K562 (cell line): ENCODE measurements at regions of chr1 and their contacts with region 1.

Region 1: DNA sequence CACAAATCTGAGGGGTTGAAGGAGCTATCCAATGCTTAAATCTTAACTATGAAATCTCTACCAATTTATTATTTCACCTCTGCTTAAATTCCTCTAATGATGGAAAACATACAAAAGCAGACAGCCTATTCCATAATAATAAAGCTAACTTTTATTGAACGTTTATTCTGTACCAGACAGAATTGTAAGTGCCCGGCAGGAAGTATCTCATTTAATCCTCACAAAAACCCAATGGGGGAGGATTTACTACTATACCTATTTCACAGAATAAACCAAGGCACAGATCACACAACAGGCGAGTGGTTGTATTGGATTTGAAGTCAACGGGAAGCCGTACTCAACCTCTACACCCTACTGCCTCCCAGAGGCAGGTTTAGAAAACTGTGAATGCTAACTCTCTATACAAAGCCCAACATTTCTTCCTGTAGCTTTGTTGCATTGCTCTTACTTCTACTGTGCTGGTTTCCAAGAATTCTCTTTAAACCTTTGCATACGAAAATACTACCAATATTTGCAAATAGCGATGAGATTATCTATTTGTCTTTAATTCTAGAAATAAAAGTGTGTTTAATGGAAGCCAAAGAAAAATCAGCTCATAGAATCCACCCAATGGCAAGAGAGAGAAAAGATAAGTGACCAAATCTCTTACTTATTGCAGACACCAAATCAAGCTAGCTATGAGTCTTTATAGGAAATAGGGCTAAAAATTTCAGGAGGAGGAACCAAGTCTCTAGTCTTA is 33.5 kb upstream of the C1orf53 start:
- DNase-seq: peak; percentile 23 to 81 (median 46)
- ATAC-seq: peak; percentile 99
- H3K4me3 ChIP-seq: no peak overlapping the region
- H3K27ac ChIP-seq: no peak overlapping the region
- H3K4me1 ChIP-seq: no peaks in the 10 kb centered on the region
- H3K27me3 ChIP-seq: no peaks in the 10 kb centered on the region
- CTCF ChIP-seq: peak; percentile 66 to 86 (median 70)
- EP300 ChIP-seq: no peak
- POLR2A ChIP-seq: no peak
- RAD21 ChIP-seq: peak; percentile 87 to 97

Region 2: GRCh38 chr1:197327776-197328364 is 541.0 kb before region 1 on chr1:
- CTCF ChIA-PET with region 1: no interaction called
- POLR2A ChIA-PET with region 1: no interaction called
- in situ Hi-C with region 1: no loop called
- intact Hi-C with region 1: loop called (anchors 10 kb)
- DNase-seq: no peak
- ATAC-seq: peak; percentile 75; the same call in 2 of the 3 replicates
- H3K4me3 ChIP-seq: no peak overlapping the region
- H3K27ac ChIP-seq: no peak overlapping the region
- H3K4me1 ChIP-seq: no peaks in the 10 kb centered on the region
- H3K27me3 ChIP-seq: no peaks in the 10 kb centered on the region
- CTCF ChIP-seq: peak; percentile 32 to 65 (median 56); a peak in 5 of 6 replicates
- EP300 ChIP-seq: no peak
- POLR2A ChIP-seq: no peak
- RAD21 ChIP-seq: peak; percentile 63 to 74

Region 3: DNA sequence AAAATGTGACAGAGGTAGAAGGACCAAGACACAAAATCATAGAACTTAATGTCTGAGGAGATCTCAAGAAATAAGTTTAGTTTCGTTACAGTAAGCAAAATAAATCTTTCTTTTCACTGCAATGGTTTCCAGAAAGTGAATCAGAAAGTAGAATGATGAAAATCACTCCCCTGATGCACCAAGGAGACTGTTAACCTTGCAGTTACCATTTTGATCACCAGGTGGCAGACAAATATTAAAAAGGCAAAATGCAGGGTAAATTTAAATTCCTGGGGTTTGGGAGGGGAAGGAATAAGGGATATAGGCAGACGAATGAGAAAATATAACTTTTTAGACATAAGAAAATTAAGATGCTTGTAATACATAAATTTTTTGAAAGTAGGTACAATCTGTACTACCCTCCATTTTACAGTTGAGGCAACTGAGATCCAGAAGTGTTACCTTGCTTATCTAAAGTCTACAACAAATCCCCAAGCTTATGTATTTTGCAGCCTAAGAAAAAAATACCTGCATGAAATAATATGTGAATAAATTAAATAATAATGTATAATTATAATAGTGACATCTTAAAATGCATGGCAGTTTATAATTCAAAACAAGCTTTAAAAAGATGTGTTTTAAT is 347.7 kb before region 1 on chr1:
- CTCF ChIA-PET with region 1: interaction called, 3 read pairs
- POLR2A ChIA-PET with region 1: no interaction called
- in situ Hi-C with region 1: no loop called
- intact Hi-C with region 1: loop called (anchors 1 kb)
- DNase-seq: peak; percentile 48 to 56 (median 52)
- ATAC-seq: peak; percentile 65
- H3K4me3 ChIP-seq: no peak overlapping the region
- H3K27ac ChIP-seq: no peak overlapping the region
- H3K4me1 ChIP-seq: no peaks in the 10 kb centered on the region
- H3K27me3 ChIP-seq: no peaks in the 10 kb centered on the region
- CTCF ChIP-seq: peak; percentile 67 to 85 (median 72); a peak in 5 of 6 replicates
- EP300 ChIP-seq: no peak
- POLR2A ChIP-seq: no peak
- RAD21 ChIP-seq: peak; percentile 73 to 85

Region 4: GRCh38 chr1:197567442-197567841 is 301.5 kb before region 1 on chr1:
- CTCF ChIA-PET with region 1: no interaction called
- POLR2A ChIA-PET with region 1: no interaction called
- in situ Hi-C with region 1: no loop called
- intact Hi-C with region 1: no loop called
- DNase-seq: peak in 1 of 4 experiments; percentile 6
- ATAC-seq: no peak
- H3K4me3 ChIP-seq: no peak overlapping the region
- H3K27ac ChIP-seq: no peak overlapping the region
- H3K4me1 ChIP-seq: no peaks in the 10 kb centered on the region
- H3K27me3 ChIP-seq: no peaks in the 10 kb centered on the region
- CTCF ChIP-seq: no peak
- EP300 ChIP-seq: no peak
- POLR2A ChIP-seq: no peak
- RAD21 ChIP-seq: no peak

Region 5: DNA sequence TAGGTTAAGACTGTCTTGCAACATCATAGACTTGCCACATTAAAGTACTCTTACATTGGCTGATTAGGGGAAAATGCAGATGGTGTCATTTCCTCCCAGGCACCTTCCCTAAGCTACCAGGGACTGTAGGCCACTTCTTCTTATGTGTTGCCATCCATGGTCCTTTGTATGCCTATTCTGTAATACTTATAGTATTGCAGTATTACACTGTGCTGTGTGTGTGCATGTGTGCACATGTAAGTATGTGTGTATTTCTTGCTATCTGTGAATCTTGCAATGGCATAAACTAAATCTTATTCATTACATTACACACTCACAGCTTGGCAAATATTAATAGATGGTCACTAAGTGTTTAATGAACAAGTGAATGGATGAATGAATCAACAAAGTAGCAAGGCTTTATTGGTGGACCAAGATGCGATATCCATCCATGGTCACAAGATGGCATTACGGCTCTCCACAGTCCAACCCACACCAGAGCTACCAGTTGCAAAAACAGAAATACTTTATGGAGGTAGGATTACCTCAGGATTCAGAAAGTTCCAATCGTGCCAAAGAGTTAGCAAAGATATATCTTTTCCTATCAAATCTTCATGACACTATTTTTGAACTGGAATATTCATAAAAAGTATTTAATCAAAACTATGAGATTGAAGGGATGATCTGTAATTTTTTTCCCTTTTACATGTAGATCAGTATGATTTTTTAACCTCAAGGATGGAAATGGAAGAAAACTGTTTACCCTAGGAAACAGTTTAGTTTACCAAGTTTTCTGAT is 253.8 kb before region 1 on chr1:
- CTCF ChIA-PET with region 1: interaction called, 12 read pairs
- POLR2A ChIA-PET with region 1: interaction called, 3 read pairs
- in situ Hi-C with region 1: loop called (anchors 5 kb)
- intact Hi-C with region 1: loop called (anchors 1 kb)
- DNase-seq: peak in 2 of 4 experiments; percentile 18 to 62
- ATAC-seq: peak; percentile 95
- H3K4me3 ChIP-seq: no peak overlapping the region
- H3K27ac ChIP-seq: no peak overlapping the region
- H3K4me1 ChIP-seq: no peaks in the 10 kb centered on the region
- H3K27me3 ChIP-seq: no peaks in the 10 kb centered on the region
- CTCF ChIP-seq: peak; percentile 63 to 74 (median 67)
- EP300 ChIP-seq: no peak
- POLR2A ChIP-seq: no peak
- RAD21 ChIP-seq: peak; percentile 85 to 88

Region 6: GRCh38 chr1:197692965-197693364 is 176.0 kb before region 1 on chr1:
- CTCF ChIA-PET with region 1: interaction called, 4 read pairs
- POLR2A ChIA-PET with region 1: no interaction called
- in situ Hi-C with region 1: no loop called
- intact Hi-C with region 1: loop called (anchors 1 kb)
- DNase-seq: peak in 1 of 4 experiments; percentile 17
- ATAC-seq: peak; percentile 80
- H3K4me3 ChIP-seq: no peak overlapping the region
- H3K27ac ChIP-seq: no peak overlapping the region
- H3K4me1 ChIP-seq: no peaks in the 10 kb centered on the region
- H3K27me3 ChIP-seq: no peaks in the 10 kb centered on the region
- CTCF ChIP-seq: peak in 2 of 3 experiments; percentile 25 to 60; a peak in 3 of 6 replicates
- EP300 ChIP-seq: no peak
- POLR2A ChIP-seq: no peak
- RAD21 ChIP-seq: peak; percentile 72 to 82

Region 7: GRCh38 chr1:197924516-197925123 is 55.7 kb after region 1 on chr1:
- CTCF ChIA-PET with region 1: no interaction called
- POLR2A ChIA-PET with region 1: no interaction called
- in situ Hi-C with region 1: no loop called
- intact Hi-C with region 1: loop called (anchors 1 kb)
- DNase-seq: peak; percentile 61 to 79 (median 68)
- ATAC-seq: peak; percentile 80
- H3K4me3 ChIP-seq: no peak overlapping the region
- H3K27ac ChIP-seq: no peak overlapping the region
- H3K4me1 ChIP-seq: peaks cover 3 to 10% of the 10 kb centered on the region in 2 experiments; a peak in 3 of 5 replicates
- H3K27me3 ChIP-seq: peaks cover 19 to 26% of the 10 kb centered on the region in 2 experiments
- CTCF ChIP-seq: peak; percentile 80 to 92 (median 84)
- EP300 ChIP-seq: no peak
- POLR2A ChIP-seq: no peak
- RAD21 ChIP-seq: peak; percentile 88 to 93

Region 8: DNA sequence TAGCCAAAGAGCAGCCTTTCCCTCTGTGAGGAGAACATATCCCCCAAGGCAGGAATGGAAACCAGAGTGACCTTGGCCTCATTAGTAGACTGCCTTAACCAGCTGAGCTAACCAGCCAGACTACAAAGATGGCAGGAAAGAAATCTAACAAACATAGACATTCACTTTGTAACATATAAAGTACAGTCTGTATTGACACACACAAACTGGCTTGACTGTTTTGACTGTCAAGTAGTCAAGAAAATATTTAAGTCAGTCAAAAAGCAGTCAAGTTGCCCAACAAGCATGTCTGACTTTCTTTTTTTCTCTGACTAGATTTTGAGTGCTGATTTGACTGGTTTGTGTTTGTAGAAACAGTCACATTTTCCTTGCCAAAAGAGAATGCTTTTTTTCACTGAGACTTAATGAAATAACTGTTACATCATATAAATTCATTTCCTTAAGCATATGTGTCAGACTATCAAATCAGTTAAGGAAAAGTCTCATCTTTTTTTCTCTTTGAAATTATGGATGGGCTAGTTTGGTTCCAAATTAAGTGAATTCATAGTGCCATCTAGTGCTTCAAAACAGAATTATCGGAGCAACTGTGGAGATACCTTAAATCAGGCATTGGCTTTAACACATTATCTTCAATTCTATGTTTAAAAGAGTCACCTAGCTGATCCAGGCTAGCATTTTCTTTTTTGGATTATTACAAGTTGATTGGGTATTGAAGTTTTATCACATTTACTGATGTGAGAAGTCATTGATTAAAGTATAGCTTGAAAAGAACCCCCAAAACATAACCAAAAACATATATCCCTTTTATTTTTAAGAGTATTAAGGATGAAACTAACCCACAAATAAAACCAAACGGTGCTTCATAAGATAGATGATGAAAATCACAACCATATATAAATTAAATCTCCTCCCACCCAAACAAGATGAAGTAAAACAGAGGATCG is 596.6 kb after region 1 on chr1:
- CTCF ChIA-PET with region 1: no interaction called
- POLR2A ChIA-PET with region 1: no interaction called
- in situ Hi-C with region 1: no loop called
- intact Hi-C with region 1: loop called (anchors 5 kb)
- DNase-seq: peak in 2 of 4 experiments; percentile 19 to 54
- ATAC-seq: peak; percentile 89
- H3K4me3 ChIP-seq: no peak overlapping the region
- H3K27ac ChIP-seq: no peak overlapping the region
- H3K4me1 ChIP-seq: no peaks in the 10 kb centered on the region
- H3K27me3 ChIP-seq: no peaks in the 10 kb centered on the region
- CTCF ChIP-seq: peak; percentile 29 to 73 (median 47); a peak in 3 of 6 replicates
- EP300 ChIP-seq: no peak
- POLR2A ChIP-seq: no peak
- RAD21 ChIP-seq: peak; percentile 90 to 95